ENCODE measurements at regions of chr22 and their contacts with region 1.

Region 1: DNA sequence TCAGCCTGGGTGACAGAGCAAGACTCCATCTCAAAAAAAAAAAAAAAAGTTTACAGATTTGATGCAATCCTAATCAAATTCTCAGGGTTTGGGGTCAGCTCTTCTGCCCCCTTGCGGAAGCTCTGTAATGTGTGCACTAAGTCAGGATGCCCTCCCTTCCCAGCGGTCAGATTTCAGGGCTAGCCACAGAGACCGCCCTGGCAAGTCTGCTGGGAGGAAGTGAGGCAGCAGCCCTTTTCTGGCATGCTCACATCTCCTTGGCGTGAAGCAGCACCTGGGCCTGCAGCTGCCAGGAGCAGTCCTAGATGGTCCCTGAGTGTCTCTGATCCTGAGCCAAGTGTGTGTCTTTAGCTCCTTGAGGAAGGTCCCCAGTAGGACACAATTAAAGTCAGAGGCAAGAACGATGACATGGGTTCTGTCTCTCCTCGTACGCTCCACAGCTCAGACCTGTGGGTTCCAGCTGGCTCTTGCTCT is 10.9 kb upstream of the APOBEC3C start:
- DNase-seq: peak; percentile 88

Region 2: DNA sequence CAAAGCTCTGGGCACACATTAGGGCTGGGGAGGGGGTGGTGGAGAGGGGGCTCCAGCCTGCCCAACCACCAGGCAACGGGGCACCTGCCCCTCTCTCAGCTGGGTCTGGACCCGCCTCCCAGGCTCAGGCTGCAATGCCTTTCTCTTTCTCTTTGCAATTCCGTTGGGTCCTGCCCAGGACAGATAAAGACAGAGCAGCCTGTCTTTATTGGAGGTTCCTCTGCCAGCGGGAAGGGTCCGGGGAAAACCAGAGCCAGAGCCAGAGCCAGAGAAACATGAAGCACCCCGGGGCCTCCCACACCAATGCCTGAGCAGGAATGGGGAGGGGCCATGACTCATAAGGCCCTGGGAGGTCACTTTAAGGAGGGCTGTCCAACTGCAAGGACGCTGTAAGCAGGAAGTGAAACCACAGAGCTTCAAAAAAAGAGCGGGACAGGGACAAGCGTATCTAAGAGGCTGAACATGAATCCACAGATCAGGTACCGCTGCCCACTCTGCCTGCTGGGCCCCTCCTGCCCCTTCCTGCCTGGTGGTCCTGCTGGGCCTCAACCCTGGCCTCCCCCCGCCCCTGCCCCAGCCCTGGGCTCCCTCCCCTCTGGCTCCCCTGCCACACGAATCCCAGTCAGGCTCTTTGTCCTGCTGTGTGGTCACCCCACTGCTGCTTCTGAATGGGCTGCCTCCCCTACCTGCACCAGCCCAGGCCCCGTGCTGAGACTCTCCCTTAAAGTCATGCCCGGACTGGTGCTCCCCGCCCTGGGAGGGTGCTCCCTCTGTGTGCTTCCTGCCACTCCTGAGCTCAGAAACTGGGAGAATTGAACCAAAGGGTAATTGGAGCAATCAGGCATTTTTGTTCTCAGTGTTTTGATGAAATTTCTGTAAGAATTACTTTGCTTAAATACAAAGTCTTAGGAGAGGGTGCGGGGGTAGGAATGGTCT is 20.9 kb before region 1 on chr22 and contains the start of gene APOBEC3B:
- CTCF ChIA-PET with region 1: interaction called, 16 read pairs
- POLR2A ChIA-PET with region 1: interaction called, 5 read pairs
- DNase-seq: no peak

Region 3: GRCh38 chr22:39055658-39056057 is 52.5 kb after region 1 on chr22:
- CTCF ChIA-PET with region 1: no interaction called
- POLR2A ChIA-PET with region 1: no interaction called
- DNase-seq: no peak

Region 4: DNA sequence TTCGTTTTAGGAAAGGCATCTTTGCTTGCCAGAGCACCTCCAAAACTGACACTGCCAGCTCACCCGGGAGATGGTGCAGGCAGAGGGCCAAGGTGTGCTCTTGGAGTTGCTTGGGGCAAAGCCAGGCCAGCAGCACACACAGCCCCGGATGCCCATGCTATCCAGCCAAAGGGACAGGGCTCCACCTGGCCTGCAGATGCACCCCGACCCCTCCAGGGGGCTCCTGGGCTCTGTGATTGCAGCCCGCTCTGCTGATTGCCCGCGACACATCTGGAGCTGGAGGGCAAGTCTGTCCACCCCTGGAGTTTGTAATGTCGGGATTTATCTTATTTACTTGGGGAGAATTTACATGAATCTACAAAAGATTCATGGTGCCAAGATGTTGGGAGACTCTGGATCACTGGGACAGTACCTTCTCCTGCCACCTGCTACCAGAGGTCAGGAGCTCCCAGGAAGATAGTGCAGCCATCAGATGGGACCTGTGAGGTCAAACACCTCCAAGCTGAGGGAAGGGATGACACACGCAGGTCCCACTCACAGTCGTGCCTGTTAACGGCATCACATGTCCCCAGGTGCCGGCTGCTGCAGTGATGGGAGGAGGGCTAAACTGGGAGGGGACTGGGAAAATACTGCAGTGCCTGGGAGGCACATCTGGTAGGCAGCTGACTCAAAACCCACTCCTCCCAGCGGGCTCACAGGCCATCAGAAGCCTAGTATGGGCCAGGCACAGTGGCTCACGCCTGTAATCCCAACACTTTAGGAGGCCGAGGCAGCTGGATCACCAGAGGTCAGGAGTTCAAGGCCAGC is 132.1 kb after region 1 on chr22:
- CTCF ChIA-PET with region 1: no interaction called
- POLR2A ChIA-PET with region 1: no interaction called
- DNase-seq: peak; percentile 70